Upper lobe of right lung (tissue), 1 donor: ENCODE measurements at regions of chr11 and their contacts with region 1.

Region 1: DNA sequence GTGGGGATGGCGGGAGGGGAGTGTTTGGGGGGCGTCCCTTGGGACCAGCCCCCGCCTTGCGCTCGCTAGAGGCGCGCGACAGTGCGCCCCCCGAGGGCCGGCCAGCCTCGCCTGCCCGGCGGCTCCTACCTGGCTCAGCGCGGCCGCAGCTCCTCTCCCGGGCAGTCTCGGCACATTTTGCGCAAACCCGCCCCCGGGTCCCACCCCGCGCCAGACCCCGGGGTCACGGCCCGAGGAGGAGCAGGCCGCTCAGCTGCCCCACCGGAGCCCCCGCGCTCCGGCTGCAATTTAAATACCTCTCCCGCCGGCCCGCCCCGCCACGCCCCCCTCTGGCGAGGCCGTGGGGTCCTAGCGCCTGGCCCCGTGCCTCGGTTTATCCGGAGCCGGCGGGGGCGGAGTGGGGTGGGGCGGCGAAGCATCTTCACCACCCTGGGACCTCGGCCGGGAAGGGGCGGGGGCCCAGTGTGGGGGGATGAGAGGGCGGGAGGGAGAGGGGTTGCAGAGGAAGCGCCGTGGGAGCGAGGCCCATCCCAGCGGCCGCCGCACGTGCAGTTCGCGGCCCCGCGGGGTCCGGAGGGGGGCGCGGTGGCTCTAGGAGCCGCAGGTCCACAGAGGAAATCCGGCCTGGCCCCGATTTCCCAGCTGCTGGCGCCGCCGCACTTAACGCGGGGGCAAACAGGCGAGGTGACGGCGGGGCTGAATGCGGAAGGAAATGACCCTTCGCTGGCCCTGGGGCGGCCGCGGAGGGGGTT is at the start of gene LRRC32:
- DNase-seq: peak; percentile 79
- ATAC-seq: peak; percentile 59
- H3K4me3 ChIP-seq: peak within 1 kb of the TSS; percentile 66
- H3K27ac ChIP-seq: peak within 1 kb of the TSS; percentile 68
- H3K4me1 ChIP-seq: peaks cover 37% of the 10 kb centered on the region
- H3K27me3 ChIP-seq: peaks cover 13% of the 10 kb centered on the region
- CTCF ChIP-seq: peak; percentile 24
- total RNA-seq, gene LRRC32: 111 TPM

Region 2: GRCh38 chr11:76551400-76551799 is 119.3 kb before region 1 on chr11:
- intact Hi-C with region 1: loop called (anchors 10 kb)
- DNase-seq: no peak
- ATAC-seq: no peak
- H3K4me3 ChIP-seq: no peak overlapping the region
- H3K27ac ChIP-seq: no peak overlapping the region
- H3K4me1 ChIP-seq: no peaks in the 10 kb centered on the region
- H3K27me3 ChIP-seq: no peaks in the 10 kb centered on the region
- CTCF ChIP-seq: peak; percentile 37

Region 3: DNA sequence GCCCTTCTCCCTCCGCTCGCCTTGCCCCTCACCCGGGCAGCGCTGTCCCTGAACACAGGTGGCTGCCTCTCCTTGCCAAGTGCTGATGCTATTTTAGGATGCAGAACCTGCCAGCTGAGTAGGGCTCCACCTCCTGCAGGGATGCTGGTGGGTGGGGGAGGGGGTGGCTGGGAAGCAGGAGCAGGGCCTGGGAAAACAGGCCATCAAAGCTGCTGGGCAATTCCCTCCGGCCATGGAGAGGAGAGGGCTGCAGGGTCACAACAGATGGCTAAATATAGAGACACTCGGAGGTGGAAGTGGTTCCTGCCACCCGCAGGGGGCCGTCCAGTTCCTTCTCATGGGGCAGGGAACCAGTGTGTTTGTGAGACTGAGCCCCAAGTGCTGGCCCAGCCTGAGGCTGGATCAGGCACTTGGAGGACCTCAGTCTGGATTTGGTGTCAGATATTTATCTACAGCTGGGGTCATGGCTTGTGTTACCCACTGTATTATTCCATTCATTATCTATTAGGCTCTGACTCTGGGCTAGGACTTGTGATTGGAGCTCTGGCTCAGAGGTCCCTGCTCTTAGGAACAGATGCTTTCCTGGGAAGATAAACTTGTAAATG is 59.7 kb before region 1 on chr11:
- intact Hi-C with region 1: loop called (anchors 10 kb)
- DNase-seq: no peak
- ATAC-seq: peak; percentile 20
- H3K4me3 ChIP-seq: no peak overlapping the region
- H3K27ac ChIP-seq: no peak overlapping the region
- H3K4me1 ChIP-seq: peaks cover 9% of the 10 kb centered on the region
- H3K27me3 ChIP-seq: no peaks in the 10 kb centered on the region
- CTCF ChIP-seq: no peak